ENCODE measurements at regions of chr16 and their contacts with region 1.

Region 1: DNA sequence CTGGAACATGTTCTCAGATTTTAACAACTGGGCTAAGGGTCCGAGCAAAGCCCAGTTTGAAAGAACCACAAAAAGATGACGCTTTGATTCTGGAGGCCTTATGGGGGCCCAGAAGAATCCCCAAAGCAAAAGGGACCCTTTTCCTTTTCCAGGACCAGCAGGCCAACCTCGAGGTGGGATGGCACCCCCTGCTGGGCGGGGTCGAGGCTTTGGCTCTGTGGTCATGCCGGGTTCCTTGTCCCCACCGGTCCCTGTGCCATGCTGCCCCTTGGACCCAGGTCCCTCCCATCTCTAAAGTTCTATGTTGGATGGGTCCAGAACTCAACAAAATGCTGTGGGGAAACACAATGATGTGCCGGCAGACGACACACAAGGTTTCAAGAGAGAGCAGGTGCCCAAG is 30.9 kb downstream of the TMEM204 start:
- DNase-seq: no peak
- H3K4me3 ChIP-seq: no peak overlapping the region
- H3K27ac ChIP-seq: peak overlapping the region; percentile 15
- H3K4me1 ChIP-seq: peaks cover 12% of the 10 kb centered on the region
- H3K27me3 ChIP-seq: no peaks in the 10 kb centered on the region
- CTCF ChIP-seq: peak; percentile 61

Region 2: GRCh38 chr16:1492923-1493745 is 71.2 kb before region 1 on chr16 and contains the start of gene TELO2:
- intact Hi-C with region 1: loop called (anchors 10 kb)
- DNase-seq: peak; percentile 83
- H3K4me3 ChIP-seq: peak within 1 kb of the TSS; percentile 85
- H3K27ac ChIP-seq: peak within 1 kb of the TSS; percentile 89
- H3K4me1 ChIP-seq: peaks cover 36% of the 10 kb centered on the region
- H3K27me3 ChIP-seq: no peaks in the 10 kb centered on the region
- CTCF ChIP-seq: no peak
- total RNA-seq, gene TELO2: 17.7 TPM

Measured in left ventricle myocardium inferior (tissue), 1 donor.